GM10248 (cell line): ENCODE measurements at regions of chr2 and their contacts with region 1.

Region 1: GRCh38 chr2:68295516-68295915 is 24.2 kb downstream of the CNRIP1 start:
- DNase-seq: no peak
- CTCF ChIP-seq: no peak

Region 2: DNA sequence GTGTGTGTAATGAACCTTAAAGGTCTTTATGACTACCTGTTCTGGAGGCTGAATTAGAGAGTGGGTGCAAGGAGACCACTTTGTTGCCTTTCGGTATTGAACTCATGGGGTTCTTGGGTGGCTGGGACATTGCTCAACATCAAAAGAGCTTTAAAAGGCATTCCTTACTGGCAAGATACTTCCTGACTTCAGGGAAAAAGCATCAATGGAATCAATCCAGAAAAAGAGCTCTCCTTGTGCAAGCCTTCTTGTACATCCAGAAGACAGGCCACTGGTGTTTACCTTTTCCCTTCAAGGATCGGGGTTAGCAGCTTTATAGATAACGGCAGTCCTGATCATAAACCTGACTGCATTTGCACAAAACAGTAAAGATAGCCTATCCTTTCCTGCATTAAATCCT is 128.3 kb before region 1 on chr2:
- CTCF ChIA-PET with region 1: no interaction called
- POLR2A ChIA-PET with region 1: no interaction called
- DNase-seq: no peak
- CTCF ChIP-seq: no peak

Region 3: DNA sequence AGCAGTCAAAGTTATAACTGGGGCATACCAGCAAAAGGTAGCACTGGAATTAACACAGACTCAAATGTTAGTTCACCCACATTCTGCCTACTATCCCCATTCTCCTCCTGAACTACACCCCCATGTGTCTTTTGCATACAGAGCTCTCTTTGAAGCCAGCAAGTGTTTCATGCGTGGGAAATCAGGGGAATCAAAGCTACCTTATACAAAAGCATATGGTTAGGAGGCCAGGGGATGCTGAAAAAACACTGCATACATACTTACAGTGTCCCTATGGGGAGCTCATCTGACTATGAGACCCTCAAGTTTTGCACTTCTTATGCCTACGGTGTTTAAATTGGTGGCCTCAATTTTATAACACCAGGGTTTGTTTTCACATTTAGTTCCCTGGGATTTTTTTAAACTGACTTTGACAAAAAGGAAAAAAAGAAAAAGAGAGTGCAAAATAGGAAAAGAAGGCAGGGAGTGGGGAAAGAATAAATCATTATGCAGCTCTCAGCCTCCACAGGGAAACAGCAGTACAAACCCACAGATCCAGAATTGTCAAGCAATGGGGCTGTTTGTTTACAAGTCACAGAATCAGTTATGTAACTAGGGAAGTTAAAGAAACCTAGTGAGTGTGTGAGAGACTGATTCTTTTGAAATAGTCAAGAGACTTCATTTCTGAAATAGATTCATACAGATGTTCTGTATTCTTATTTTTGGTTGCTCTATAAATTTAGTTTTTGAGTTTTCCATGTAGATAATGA is 23.1 kb before region 1 on chr2:
- CTCF ChIA-PET with region 1: interaction called, 16 read pairs
- POLR2A ChIA-PET with region 1: no interaction called
- DNase-seq: no peak
- CTCF ChIP-seq: no peak

Region 4: DNA sequence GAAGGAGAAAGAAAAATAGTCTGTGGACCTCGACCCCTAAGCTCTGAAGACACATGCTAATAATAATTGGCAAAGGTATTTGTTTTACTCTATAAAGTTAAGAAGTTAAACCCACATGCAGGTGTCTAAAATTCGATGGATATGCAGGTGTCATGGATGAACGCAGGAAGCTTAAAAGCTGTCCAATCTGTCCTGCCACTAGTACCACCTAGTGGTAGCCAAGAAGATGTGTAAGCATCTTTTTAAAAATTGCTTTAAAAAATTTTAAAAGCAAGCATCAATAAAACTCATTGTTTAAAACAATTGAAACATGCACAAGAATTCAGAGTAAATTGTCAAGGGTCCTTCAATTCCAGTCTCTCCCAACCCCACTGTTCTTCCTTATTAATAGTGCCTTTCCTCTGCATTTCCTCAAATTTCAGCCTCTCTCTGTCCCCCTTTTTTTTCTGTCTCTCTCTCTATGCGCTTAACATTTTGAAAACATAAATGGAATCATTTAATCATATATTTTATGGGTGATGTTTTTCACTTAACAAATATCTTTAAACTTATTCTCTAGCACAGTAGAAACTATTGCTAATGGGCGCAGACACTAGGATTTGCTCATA is 12.6 kb before region 1 on chr2:
- CTCF ChIA-PET with region 1: interaction called, 50 read pairs
- POLR2A ChIA-PET with region 1: no interaction called
- DNase-seq: peak; percentile 67
- CTCF ChIP-seq: peak; percentile 66